GM10248 (cell line): ENCODE measurements at regions of chr14 and their contacts with region 1.

Region 1: DNA sequence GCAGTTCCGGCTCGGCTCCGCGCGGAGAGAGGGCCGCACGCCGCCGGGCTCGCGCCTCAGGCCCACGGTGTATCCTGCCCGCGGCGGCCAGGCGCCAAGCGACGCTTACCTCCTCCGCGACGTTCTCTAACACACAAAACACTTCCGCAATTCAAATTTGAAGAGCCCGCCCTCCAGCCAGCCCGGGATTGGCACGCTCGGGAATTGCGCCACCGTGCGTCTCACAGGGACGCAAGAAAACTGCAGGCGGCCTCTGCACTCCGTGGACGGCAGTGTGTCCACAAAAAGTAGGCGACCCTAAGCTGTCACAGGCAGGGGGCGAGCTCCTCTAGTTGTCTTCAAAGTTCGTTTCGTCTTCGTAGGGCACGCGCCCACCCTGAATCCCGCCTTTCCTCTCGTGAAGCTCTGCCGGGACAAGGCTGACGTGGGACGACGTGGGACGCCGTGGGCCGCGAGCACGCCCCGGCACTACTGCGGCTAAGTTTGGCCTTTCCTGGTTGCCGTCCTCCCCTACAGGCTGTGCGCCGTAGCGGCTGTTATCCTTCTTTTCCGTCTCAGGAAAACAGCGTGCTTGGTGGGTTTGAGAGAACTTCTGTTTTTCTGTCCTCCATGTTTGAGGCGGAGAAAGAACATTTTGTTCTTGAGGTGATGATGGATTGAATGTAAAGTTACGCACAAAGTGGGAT is at the start of gene MIS18BP1:
- DNase-seq: peak; percentile 91
- CTCF ChIP-seq: peak; percentile 79

Region 2: GRCh38 chr14:45212231-45212630 is 41.0 kb before region 1 on chr14:
- CTCF ChIA-PET with region 1: no interaction called
- POLR2A ChIA-PET with region 1: no interaction called
- DNase-seq: no peak
- CTCF ChIP-seq: no peak

Region 3: DNA sequence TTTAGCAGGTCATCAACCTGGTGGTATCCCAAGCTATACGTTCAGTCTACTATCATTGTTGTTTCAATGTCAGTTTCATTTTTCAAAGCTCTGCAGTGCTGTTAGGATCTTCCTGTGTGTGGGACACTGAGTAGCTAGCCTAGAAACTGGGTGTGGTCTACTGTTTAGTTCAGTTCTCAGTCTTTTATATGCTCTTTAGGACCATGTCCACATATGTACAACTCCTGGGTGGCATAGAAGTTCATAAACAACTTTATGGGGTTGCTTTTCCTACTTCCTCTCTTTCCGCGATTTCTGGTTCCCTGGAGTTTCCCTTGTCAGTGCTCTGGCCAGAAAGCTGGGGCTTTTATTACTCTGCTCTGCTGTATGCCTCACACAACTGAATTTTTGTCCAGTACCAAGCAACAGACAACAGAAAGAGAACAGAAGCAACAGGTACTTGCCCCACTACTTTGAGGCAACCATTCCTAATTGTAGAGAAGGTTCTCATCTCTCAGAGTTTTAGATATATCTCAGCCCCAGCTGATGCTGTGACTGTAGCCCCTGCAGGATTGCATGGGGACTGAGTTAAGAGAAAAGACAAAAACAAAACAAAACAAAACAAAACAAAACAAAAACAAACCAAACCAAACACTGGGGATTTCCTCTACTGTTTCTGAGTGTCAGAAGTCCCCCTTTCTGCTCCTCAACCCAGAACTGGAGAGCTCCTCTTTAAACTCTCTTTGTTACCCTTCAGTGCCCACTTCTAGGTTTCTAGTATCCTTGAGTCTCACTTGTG is 30.5 kb before region 1 on chr14:
- CTCF ChIA-PET with region 1: interaction called, 18 read pairs
- POLR2A ChIA-PET with region 1: no interaction called
- DNase-seq: peak; percentile 25
- CTCF ChIP-seq: no peak

Region 4: DNA sequence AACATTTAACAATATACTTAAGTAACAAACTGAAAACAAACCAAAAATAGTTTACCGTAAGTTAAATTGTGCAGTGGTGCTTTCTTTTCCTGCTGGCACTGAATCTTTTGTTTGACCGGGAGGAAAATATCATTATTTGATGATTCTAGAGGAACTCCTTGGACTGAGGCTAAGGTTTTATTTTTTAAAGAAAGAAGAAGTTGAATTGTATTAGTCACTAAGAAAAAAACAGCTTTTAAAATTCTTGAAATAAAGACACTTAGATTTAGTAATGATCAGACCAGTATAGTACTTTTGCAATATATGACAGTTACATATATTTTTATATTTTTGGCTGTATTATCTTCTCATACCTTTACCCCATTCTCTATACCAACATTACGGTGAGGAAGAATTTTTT is 10.5 kb before region 1 on chr14:
- CTCF ChIA-PET with region 1: interaction called, 15 read pairs
- POLR2A ChIA-PET with region 1: no interaction called
- DNase-seq: no peak
- CTCF ChIP-seq: no peak

Region 5: DNA sequence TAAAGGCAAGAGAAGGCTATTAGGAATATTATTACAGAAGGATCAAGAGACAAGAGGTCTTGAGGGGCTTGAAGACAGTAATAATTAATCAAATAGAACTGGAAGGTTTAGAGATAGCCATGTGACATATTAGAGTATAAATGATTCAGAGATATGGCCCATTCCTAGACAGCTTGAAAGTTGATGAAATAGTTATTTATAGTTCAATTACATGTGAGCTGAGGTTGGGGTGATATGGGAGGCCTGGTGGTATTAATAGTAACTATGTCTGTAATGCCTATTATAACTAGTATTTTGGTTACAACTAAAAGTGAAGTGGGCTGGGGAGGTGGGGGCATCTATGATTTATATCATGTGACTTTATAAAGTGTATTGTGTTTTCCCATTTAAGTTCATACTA is 13.9 kb after region 1 on chr14:
- CTCF ChIA-PET with region 1: interaction called, 28 read pairs
- POLR2A ChIA-PET with region 1: interaction called, 3 read pairs
- DNase-seq: no peak
- CTCF ChIP-seq: no peak